Naive thymus-derived CD4-positive, alpha-beta T cell (primary cell): ENCODE measurements at regions of chr6 and their contacts with region 1.

Region 1: DNA sequence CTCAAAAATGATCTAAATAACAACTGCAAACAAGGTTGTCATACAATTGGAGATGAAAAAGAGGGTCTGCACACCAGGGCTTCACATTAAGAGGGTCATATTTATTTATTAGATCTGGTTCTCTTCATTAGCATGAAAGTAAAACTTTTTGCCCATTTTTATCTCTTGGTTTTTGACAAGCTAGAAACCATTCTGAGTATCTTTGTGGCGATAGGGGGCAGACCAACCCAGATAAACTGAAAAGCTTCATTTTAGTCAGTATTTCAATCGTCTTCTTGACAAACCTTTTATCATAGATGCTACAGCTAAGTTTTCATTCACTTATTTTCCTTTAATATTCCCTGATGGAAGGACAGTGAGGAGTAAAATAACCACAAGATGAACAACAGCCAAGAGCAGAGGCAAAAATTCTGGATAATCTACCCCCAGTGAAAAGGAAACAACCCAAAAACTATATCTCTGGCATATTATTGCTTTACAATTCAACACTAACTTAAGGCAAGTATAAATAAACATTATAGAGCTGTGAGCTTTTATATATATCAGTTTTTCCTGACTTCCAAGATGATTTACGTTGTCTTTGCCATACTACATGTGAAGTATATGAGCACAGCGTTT is 45.2 kb downstream of the THEMIS start:
- DNase-seq: peak in 7 of 9 donors; percentile 34 to 66 (median 49)
- ATAC-seq: peak; percentile 64
- H3K4me3 ChIP-seq: no peak overlapping the region
- H3K4me3 Mint-ChIP-seq: peak overlapping the region in 9 of 10 donors; percentile 8 to 70 (median 48)
- H3K27ac ChIP-seq: no peak overlapping the region
- H3K27ac Mint-ChIP-seq: peak overlapping the region; percentile 1 to 85 (median 76)
- H3K4me1 ChIP-seq: peaks cover 43 to 45% of the 10 kb centered on the region in 2 donors
- H3K4me1 Mint-ChIP-seq: peaks cover 43 to 94% (median 87%) of the 10 kb centered on the region in 7 donors
- H3K27me3 ChIP-seq: no peaks in the 10 kb centered on the region
- H3K27me3 Mint-ChIP-seq: no peaks in the 10 kb centered on the region

Region 2: DNA sequence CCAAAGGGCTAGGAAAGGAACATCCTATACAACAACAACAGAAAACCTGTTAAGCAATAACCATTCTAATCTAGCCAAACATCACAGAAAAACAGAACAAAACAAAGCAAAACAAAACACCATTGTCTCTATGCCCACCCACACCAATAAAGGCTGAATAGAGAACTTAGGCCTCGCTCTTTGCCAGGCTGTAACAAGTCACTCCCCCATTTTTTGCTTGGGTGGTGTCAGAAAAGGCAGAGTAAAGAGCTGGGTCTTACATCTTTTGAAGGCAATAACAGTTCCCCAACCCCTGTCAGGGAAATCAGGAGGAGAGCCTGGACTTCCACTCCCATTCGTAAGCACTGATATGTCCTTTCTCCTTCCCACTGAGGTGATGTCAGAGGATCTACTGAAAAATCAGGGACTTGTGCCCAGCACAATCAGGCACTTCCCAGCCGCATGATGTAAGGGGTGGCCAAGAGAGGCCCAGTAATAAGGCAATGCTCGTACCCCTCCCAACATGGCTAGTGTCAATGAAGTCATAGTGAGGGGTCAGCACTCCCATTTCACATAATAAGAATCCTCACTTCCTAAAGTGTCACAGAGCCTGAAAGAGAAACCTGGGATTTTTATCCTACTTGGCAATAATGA is 14.2 kb after region 1 on chr6:
- CTCF ChIA-PET with region 1: interaction called, 20 read pairs
- POLR2A ChIA-PET with region 1: interaction called, 6 read pairs
- intact Hi-C with region 1: loop called in 1 of 2 experiments (anchors 1 kb)
- DNase-seq: no peak
- ATAC-seq: no peak
- H3K4me3 ChIP-seq: no peak overlapping the region
- H3K4me3 Mint-ChIP-seq: peak overlapping the region in 9 of 10 donors; percentile 4 to 73 (median 52)
- H3K27ac ChIP-seq: no peak overlapping the region
- H3K27ac Mint-ChIP-seq: peak overlapping the region in 8 of 9 donors; percentile 10 to 89 (median 62)
- H3K4me1 ChIP-seq: peaks cover 12 to 24% of the 10 kb centered on the region in 2 donors
- H3K4me1 Mint-ChIP-seq: peaks cover 28 to 80% (median 60%) of the 10 kb centered on the region in 7 donors
- H3K27me3 ChIP-seq: no peaks in the 10 kb centered on the region
- H3K27me3 Mint-ChIP-seq: no peaks in the 10 kb centered on the region

Region 3: DNA sequence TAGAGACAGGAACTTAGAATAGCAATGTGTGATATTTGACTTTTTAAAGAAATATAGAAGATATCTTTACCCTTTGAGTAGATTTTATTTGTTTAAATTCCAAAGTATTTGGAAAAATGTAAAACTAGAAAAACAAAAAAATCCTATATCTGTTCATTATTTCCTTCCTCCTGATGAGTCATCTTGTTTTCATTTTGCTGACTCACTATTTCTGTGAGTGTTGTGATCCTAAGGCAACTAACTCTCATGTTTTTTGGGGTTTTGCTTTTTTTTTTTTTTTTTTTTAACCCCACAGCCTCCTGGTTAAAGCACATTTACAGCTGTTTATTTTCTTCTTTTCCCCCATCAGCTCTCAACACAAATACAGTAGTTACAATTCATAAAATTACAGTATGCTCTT is 83.0 kb after region 1 on chr6:
- CTCF ChIA-PET with region 1: interaction called, 3 read pairs
- POLR2A ChIA-PET with region 1: interaction called, 3 read pairs
- intact Hi-C with region 1: loop called in 1 of 2 experiments (anchors 1 kb)
- DNase-seq: no peak
- ATAC-seq: no peak
- H3K4me3 ChIP-seq: no peak overlapping the region
- H3K4me3 Mint-ChIP-seq: peak overlapping the region in 2 of 10 donors; percentile 14 to 39
- H3K27ac ChIP-seq: no peak overlapping the region
- H3K27ac Mint-ChIP-seq: peak overlapping the region in 5 of 9 donors; percentile 28 to 97 (median 57)
- H3K4me1 ChIP-seq: peaks cover 25 to 40% of the 10 kb centered on the region in 2 donors
- H3K4me1 Mint-ChIP-seq: peaks cover 21 to 81% (median 63%) of the 10 kb centered on the region in 7 donors
- H3K27me3 ChIP-seq: no peaks in the 10 kb centered on the region
- H3K27me3 Mint-ChIP-seq: no peaks in the 10 kb centered on the region

Region 4: GRCh38 chr6:128112494-128112893 is 256.8 kb after region 1 on chr6:
- CTCF ChIA-PET with region 1: interaction called, 3 read pairs
- POLR2A ChIA-PET with region 1: no interaction called
- intact Hi-C with region 1: loop called in 1 of 2 experiments (anchors 5 kb)
- DNase-seq: peak in 5 of 9 donors; percentile 2 to 30 (median 9)
- ATAC-seq: no peak
- H3K4me3 ChIP-seq: peak overlapping the region; percentile 32
- H3K4me3 Mint-ChIP-seq: peak overlapping the region; percentile 64 to 84 (median 76)
- H3K27ac ChIP-seq: peak overlapping the region; percentile 9
- H3K27ac Mint-ChIP-seq: peak overlapping the region; percentile 20 to 90 (median 74)
- H3K4me1 ChIP-seq: peaks cover 0 to 3% of the 10 kb centered on the region in 2 donors
- H3K4me1 Mint-ChIP-seq: peaks cover 11 to 22% (median 20%) of the 10 kb centered on the region in 7 donors
- H3K27me3 ChIP-seq: no peaks in the 10 kb centered on the region
- H3K27me3 Mint-ChIP-seq: no peaks in the 10 kb centered on the region

Region 5: DNA sequence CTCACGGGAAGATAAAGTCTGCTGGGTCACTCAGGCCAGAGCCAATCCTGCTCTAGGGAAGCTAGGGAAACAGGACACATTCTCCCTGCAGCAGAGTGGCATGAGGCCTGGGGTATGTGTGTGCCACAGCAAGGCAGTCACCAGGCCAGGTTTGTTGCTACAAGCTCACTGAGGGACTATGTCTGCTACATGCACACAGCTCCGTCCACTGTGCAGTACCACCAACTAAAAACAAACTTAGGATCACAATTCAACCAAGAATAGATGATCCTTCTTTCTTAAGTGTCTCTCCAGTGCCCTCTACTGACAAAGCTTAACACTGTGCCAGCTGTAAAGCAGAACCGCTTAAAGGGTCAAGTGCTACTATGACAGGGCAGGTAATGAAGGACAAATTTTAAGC is 472.2 kb after region 1 on chr6:
- CTCF ChIA-PET with region 1: interaction called, 20 read pairs
- POLR2A ChIA-PET with region 1: no interaction called
- intact Hi-C with region 1: loop called (anchors 1 kb)
- DNase-seq: peak in 7 of 9 donors; percentile 13 to 37 (median 27)
- ATAC-seq: peak; percentile 76
- H3K4me3 ChIP-seq: no peak overlapping the region
- H3K4me3 Mint-ChIP-seq: no peak overlapping the region
- H3K27ac ChIP-seq: no peak overlapping the region
- H3K27ac Mint-ChIP-seq: no peak overlapping the region
- H3K4me1 ChIP-seq: no peaks in the 10 kb centered on the region
- H3K4me1 Mint-ChIP-seq: peaks cover 0 to 6% (median 0%) of the 10 kb centered on the region in 7 donors
- H3K27me3 ChIP-seq: no peaks in the 10 kb centered on the region
- H3K27me3 Mint-ChIP-seq: peaks cover 0 to 3% (median 0%) of the 10 kb centered on the region in 5 donors

Region 6: DNA sequence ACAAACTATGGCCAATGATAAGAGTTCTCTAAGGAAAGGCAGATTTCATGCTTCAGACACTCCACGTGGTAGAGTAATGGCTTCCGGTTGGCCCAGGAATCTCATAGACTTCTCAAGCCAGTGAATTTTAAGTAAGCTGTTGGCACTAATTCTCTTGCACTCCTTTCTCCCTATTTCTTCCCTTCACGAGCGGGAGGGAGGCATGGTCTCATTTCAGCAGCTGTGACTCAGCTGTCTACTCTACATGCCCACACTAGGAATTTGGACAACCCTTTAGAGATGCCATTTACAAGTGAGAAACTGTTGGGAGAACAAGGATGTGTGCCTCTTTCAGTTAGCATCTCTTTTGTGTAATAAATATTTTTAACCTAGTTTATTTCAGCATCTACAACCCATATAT is 557.0 kb after region 1 on chr6:
- CTCF ChIA-PET with region 1: no interaction called
- POLR2A ChIA-PET with region 1: no interaction called
- intact Hi-C with region 1: no loop called
- DNase-seq: no peak
- ATAC-seq: no peak
- H3K4me3 ChIP-seq: no peak overlapping the region
- H3K4me3 Mint-ChIP-seq: no peak overlapping the region
- H3K27ac ChIP-seq: no peak overlapping the region
- H3K27ac Mint-ChIP-seq: no peak overlapping the region
- H3K4me1 ChIP-seq: no peaks in the 10 kb centered on the region
- H3K4me1 Mint-ChIP-seq: no peaks in the 10 kb centered on the region
- H3K27me3 ChIP-seq: no peaks in the 10 kb centered on the region
- H3K27me3 Mint-ChIP-seq: no peaks in the 10 kb centered on the region

Region 7: DNA sequence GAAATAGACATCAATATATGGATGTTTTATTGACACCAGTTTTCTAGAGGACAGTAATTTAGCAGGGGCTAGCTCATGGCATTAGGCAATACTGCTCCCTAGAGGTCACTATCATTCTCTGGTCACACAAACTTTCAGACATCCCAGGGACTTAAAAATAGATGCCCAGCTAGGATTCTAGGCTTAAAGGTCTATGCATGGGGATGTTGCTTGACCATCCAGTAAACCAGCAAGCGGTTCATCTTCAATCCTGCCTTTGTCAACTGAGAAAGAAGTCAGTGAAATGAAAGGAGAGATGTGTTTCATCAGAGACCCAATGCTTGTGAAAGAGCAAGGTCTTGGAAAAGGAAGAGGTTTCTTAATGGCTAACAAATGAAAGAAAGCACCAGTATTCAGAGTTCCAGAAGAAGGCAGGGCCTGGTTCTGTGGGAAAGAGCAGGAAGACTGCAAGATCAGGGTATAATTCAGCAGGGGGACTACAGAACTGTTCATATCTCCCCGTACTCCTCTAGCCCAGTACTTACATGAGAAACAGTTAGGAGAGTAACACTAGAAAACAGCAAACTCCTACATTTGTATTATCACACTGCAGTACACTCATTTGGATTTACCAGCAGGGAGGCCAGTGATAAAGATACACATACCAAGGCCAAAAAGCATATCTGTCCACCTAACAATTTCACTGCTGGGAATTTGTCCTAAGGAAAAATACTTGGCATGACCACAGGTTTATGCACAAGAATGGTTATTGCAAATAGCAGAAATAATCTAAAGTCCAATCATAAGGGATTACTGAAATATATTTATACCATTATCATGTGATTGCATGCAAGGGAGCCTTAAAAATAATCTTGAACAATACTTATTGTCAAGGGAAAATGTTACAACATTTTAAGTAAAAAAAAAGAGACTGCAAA is 875.9 kb after region 1 on chr6:
- CTCF ChIA-PET with region 1: no interaction called
- POLR2A ChIA-PET with region 1: no interaction called
- intact Hi-C with region 1: loop called in 1 of 2 experiments (anchors 1 kb)
- DNase-seq: peak in 4 of 9 donors; percentile 4 to 14 (median 7)
- ATAC-seq: no peak
- H3K4me3 ChIP-seq: no peak overlapping the region
- H3K4me3 Mint-ChIP-seq: no peak overlapping the region
- H3K27ac ChIP-seq: no peak overlapping the region
- H3K27ac Mint-ChIP-seq: no peak overlapping the region
- H3K4me1 ChIP-seq: no peaks in the 10 kb centered on the region
- H3K4me1 Mint-ChIP-seq: no peaks in the 10 kb centered on the region
- H3K27me3 ChIP-seq: peaks cover 0 to 3% of the 10 kb centered on the region in 2 donors
- H3K27me3 Mint-ChIP-seq: peaks cover 0 to 24% (median 11%) of the 10 kb centered on the region in 5 donors